ENCODE measurements at regions of chr12 and their contacts with region 1.

Region 1: GRCh38 chr12:31589904-31590641 is 863 bp downstream of the DENND5B start:
- DNase-seq: peak; percentile 69 to 74
- ATAC-seq: peak; percentile 46 to 79 (median 55)
- H3K4me3 ChIP-seq: peak overlapping the region; percentile 63 to 99 (median 88)
- H3K27ac ChIP-seq: peak overlapping the region; percentile 88 to 99 (median 97)
- H3K4me1 ChIP-seq: peaks cover 0 to 45% (median 24%) of the 10 kb centered on the region in 9 donors
- H3K27me3 ChIP-seq: peaks cover 0 to 8% (median 0%) of the 10 kb centered on the region in 7 donors
- CTCF ChIP-seq: peak in 3 of 9 donors; percentile 28 to 44 (median 34)

Region 2: DNA sequence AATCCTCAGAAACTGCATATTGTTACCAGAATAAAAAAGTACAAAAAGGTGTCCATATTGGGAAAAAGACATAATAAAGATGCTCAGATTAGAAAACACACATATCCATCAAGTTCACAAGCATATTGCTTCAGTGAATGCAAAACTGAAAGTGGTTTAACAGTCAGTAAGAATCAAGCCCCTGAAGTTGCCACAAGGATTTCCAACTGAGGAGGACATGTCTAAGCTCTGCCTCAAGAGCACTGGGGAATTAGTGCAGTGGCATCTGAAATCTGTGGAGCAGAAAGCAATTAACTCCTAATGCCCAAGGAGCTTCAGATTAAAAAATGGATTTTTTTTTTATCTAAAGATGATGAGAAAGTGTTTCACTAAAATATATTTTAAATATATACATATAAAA is 112.4 kb before region 1 on chr12:
- intact Hi-C with region 1: loop called in 1 of 10 experiments (anchors 10 kb)
- DNase-seq: no peak
- ATAC-seq: no peak
- H3K4me3 ChIP-seq: no peak overlapping the region
- H3K27ac ChIP-seq: no peak overlapping the region
- H3K4me1 ChIP-seq: peaks cover 0 to 24% (median 8%) of the 10 kb centered on the region in 9 donors
- H3K27me3 ChIP-seq: no peaks in the 10 kb centered on the region
- CTCF ChIP-seq: no peak

Region 3: DNA sequence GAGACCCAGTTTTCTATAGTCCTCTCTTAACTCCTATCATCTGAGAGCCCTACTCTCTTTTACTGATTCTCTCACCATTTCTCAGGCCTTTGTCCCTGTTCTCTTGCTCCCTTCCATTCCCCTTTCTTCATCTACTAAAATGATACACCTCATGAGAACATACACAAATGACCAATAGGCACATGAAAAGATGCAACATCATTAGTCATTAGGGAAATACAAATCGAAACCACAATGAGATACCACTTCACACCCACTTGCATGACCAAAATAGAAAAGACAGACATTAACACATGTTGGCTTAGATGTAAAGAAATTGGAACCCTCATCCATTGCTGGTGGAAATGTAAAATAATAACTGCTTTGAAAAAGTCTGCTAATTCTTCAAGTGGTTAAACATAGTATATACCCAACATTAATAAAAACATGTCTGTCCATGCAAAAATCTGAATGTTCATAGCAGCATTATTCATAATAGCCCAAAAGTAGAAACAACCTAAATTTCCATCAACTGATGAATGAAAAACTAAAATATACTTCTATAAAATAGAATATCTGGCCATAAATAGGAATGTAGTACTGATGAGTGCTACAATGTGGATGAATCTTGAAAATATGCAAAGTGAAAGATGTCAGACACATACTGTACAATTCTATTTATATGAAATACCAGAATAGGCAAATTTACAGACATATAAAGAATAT is 65.1 kb before region 1 on chr12:
- intact Hi-C with region 1: loop called in 2 of 10 experiments (anchors 5 to 10 kb)
- DNase-seq: no peak
- ATAC-seq: no peak
- H3K4me3 ChIP-seq: no peak overlapping the region
- H3K27ac ChIP-seq: no peak overlapping the region
- H3K4me1 ChIP-seq: peaks cover 0 to 70% (median 17%) of the 10 kb centered on the region in 9 donors
- H3K27me3 ChIP-seq: no peaks in the 10 kb centered on the region
- CTCF ChIP-seq: no peak

Region 4: DNA sequence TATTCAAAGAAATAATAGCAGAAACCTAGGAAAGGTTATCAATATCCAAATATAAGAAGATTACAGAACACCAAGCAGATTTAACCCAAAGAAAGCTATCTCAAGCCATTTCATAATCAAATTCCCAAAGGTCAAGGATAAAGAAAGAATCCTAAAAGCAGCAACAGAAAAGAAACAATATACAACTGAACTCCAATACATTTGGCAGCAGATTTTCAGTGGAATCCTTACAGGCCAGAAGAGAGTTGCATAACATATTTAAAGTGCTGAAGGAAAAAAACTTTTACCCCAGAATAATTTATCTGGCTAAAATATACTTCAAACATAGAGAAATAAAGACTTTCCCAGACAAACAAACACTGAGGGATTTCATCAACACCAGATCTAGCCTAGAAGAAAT is 53.4 kb before region 1 on chr12:
- intact Hi-C with region 1: loop called in 1 of 10 experiments (anchors 10 kb)
- DNase-seq: no peak
- ATAC-seq: no peak
- H3K4me3 ChIP-seq: no peak overlapping the region
- H3K27ac ChIP-seq: peak overlapping the region in 2 of 10 donors; percentile 8 to 18
- H3K4me1 ChIP-seq: peaks cover 0 to 45% (median 21%) of the 10 kb centered on the region in 9 donors
- H3K27me3 ChIP-seq: no peaks in the 10 kb centered on the region
- CTCF ChIP-seq: no peak

Region 5: DNA sequence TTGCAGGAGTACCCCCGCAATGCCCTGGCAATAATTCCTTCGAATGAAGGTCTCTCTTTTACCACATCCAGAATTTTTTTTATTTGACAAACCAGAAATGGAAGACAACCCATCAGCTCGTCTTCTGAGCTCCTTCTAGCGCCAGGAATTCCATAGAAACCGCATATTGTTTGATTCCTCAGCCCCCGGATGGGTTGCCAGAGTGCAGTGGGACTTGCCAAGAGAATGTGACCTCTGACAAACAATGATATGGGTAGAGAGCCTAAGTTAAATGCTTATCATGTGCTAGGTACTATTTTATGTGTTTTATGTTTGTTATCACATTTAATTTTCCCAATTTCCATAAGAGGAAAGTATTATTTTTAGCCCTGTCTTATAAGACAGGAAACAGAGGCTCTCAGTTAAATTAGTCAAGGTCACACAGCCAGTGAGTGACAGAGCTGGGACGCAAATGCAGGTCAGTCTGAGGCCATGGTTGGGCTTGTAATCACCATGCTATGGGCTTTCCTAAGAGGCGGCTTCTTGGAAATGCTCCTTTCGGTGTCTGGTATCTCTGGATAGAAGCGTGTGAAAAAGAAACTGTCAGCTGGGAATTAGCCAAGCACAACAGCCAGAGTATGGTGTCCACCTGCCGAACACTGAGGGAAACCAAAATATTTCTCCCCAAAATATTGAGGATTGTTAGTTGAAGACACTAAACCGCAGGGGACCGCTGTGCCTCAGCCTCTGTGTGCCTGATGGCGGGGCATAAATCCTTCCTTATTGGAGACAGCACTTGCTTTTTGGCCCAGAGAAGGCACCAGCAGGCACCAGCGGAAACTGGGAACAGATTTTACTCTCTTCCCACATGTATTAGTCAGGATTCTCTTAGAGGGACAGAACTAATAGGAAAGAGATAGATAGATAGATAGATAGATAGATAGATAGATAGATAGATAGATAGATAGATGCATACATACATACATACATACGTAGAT is 40.0 kb after region 1 on chr12:
- intact Hi-C with region 1: loop called in 3 of 10 experiments (anchors 2 to 5 kb)
- DNase-seq: peak; percentile 23 to 72
- ATAC-seq: peak; percentile 88 to 97 (median 94)
- H3K4me3 ChIP-seq: peak overlapping the region in 1 of 10 donors; percentile 3
- H3K27ac ChIP-seq: peak overlapping the region in 9 of 10 donors; percentile 38 to 68 (median 57)
- H3K4me1 ChIP-seq: peaks cover 6 to 24% (median 17%) of the 10 kb centered on the region in 9 donors
- H3K27me3 ChIP-seq: no peaks in the 10 kb centered on the region
- CTCF ChIP-seq: no peak

Region 6: DNA sequence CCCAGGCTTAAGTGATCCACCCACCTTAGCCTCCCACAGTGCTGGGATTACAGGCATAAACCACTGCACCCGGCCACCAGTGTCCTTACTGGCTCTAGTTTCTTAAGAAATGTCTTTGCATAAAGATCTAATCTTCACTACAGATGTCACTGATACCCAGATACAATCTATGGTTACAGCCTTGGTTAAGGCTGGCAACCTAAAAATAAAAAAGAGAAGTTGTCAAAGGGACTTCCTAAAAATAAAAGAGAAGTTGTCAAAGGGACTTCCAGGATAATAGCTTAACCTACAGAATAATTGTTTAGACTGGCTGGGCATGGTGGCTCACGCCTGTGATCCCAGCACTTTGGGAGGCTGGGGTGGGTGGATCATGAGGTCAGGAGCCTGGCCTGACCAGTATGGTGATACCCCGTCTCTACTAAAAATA is 97.0 kb after region 1 on chr12:
- intact Hi-C with region 1: no loop called
- DNase-seq: no peak
- ATAC-seq: peak in 4 of 8 donors; percentile 24 to 37 (median 27)
- H3K4me3 ChIP-seq: no peak overlapping the region
- H3K27ac ChIP-seq: peak overlapping the region in 1 of 10 donors; percentile 58
- H3K4me1 ChIP-seq: peaks cover 0 to 10% (median 0%) of the 10 kb centered on the region in 9 donors
- H3K27me3 ChIP-seq: no peaks in the 10 kb centered on the region
- CTCF ChIP-seq: no peak